Heart right ventricle (tissue), 16 donors: ENCODE measurements at regions of chr18 and their contacts with region 1.

Region 1: GRCh38 chr18:22169007-22169864 is at the start of gene GATA6:
- DNase-seq: peak; percentile 89 to 90
- ATAC-seq: peak; percentile 59 to 87 (median 72)
- H3K4me3 ChIP-seq: peak within 1 kb of the TSS; percentile 71 to 97 (median 93)
- H3K27ac ChIP-seq: peak within 1 kb of the TSS; percentile 92 to 100 (median 98)
- H3K4me1 ChIP-seq: peaks cover 0 to 43% (median 29%) of the 10 kb centered on the region in 9 donors
- H3K27me3 ChIP-seq: peaks cover 0 to 96% (median 37%) of the 10 kb centered on the region in 7 donors
- CTCF ChIP-seq: peak in 7 of 9 donors; percentile 25 to 68 (median 53)
- total RNA-seq, gene GATA6: 54.6 to 99.5 (median 73.4) TPM

Region 2: GRCh38 chr18:21997207-21998143 is 171.8 kb before region 1 on chr18:
- intact Hi-C with region 1: loop called in 7 of 10 experiments (anchors 2 to 10 kb)
- DNase-seq: peak in 1 of 2 donors; percentile 20
- ATAC-seq: peak; percentile 32 to 87 (median 65)
- H3K4me3 ChIP-seq: no peak overlapping the region
- H3K27ac ChIP-seq: peak overlapping the region in 9 of 10 donors; percentile 17 to 82 (median 68)
- H3K4me1 ChIP-seq: peaks cover 0 to 34% (median 9%) of the 10 kb centered on the region in 9 donors
- H3K27me3 ChIP-seq: no peaks in the 10 kb centered on the region
- CTCF ChIP-seq: peak; percentile 65 to 90 (median 85)

Region 3: GRCh38 chr18:22094358-22094734 is 74.9 kb before region 1 on chr18:
- intact Hi-C with region 1: loop called in 2 of 10 experiments (anchors 5 kb)
- DNase-seq: no peak
- ATAC-seq: no peak
- H3K4me3 ChIP-seq: no peak overlapping the region
- H3K27ac ChIP-seq: no peak overlapping the region
- H3K4me1 ChIP-seq: peaks cover 0 to 7% (median 3%) of the 10 kb centered on the region in 9 donors
- H3K27me3 ChIP-seq: peaks cover 0 to 7% (median 0%) of the 10 kb centered on the region in 7 donors
- CTCF ChIP-seq: no peak

Region 4: DNA sequence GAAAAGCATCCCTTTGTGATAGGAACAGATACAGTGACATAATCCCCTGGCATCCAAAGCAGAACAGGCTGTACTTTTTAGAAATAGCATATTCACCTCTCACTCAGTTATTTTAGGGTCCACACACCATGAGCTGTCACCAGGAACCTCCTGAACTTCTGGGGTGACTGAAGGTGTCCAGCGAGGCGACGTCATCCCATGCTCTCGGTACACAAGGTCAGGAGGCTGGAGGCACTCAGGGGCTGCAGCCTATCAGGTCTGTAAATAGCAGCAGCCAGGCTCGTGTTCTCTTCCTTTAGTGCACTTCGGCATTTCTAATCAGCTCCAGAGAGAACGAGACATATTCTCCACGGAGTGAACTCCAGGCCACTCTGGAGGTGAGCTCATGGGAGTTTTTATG is 98.5 kb after region 1 on chr18:
- intact Hi-C with region 1: loop called in 2 of 10 experiments (anchors 5 kb)
- DNase-seq: peak; percentile 70 to 85
- ATAC-seq: peak; percentile 83 to 97 (median 92)
- H3K4me3 ChIP-seq: peak overlapping the region in 5 of 10 donors; percentile 44 to 52 (median 48)
- H3K27ac ChIP-seq: peak overlapping the region; percentile 78 to 95 (median 91)
- H3K4me1 ChIP-seq: peaks cover 0 to 41% (median 4%) of the 10 kb centered on the region in 9 donors
- H3K27me3 ChIP-seq: no peaks in the 10 kb centered on the region
- CTCF ChIP-seq: no peak

Region 5: DNA sequence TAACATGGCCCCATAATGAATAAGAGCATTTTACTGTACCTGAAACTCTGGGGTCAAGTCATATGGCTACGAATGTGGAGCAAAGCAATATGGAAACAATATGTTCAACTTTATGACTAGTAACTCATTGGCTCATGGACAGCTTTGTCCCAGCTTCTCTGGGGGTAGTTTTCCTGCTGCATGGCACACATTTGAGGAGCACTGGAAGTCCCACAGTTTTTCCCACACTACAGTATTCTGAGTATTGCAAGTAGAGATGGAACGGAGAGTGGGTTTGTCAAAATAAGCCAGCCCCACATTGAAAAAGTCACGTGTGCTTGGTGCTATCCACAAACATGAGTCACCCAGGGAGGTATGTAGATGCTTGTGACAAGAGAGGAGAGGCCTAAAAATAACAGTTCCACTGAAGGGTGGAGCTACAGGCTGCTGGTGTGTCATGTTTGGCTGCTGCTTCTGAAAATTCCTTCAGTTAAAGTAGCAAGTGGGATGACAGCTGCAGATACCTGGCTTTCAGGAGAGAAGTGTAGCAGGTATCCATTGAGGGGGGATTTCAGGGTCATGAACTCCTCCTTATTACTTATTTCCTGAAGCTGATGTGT is 296.7 kb after region 1 on chr18:
- intact Hi-C with region 1: loop called in 4 of 10 experiments (anchors 5 to 10 kb)
- DNase-seq: peak in 1 of 2 donors; percentile 74
- ATAC-seq: peak; percentile 85 to 95 (median 90)
- H3K4me3 ChIP-seq: no peak overlapping the region
- H3K27ac ChIP-seq: peak overlapping the region; percentile 56 to 90 (median 85)
- H3K4me1 ChIP-seq: peaks cover 15 to 48% (median 42%) of the 10 kb centered on the region in 9 donors
- H3K27me3 ChIP-seq: no peaks in the 10 kb centered on the region
- CTCF ChIP-seq: no peak

Region 6: DNA sequence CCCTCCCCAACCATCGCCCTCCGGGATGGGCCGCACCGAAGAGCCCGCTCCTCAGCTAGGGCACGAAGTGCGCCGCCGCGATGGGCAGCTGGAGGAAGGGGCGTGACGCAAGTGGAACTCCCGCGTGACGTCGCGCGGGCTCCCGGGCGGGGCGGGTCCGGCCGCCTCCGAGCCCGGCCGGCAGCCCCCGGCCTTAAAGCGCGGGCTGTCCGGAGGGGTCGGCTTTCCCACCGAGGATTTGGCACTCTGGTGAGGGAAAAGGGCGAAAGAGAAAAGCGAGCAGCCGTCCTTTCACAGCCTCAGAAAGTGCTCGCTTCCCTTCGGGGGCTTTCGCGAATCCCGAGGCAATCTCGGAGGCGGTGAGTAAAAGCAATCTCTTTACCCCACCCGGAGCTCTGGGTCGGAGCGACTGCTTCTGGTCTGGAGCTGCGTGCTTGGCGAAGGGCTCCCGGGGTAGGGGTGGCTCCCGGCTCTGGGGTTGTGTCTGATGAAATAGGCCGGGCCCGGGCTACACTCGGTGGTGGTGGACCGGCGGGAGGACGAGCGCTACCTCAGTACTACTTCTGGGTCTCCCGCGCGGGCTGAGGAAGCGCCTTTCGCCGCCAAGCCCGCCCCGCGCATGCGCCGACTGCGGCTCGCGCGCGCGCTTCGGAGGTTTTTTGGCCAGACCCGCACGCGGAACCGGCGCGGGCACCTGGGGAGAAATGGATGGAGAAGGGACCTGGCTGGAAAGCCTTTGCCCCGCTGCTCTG is 764.1 kb after region 1 on chr18 and contains the start of gene RBBP8:
- intact Hi-C with region 1: loop called in 1 of 10 experiments (anchors 5 kb)
- DNase-seq: peak; percentile 85 to 89
- ATAC-seq: peak; percentile 97 to 98 (median 98)
- H3K4me3 ChIP-seq: peak within 1 kb of the TSS; percentile 71 to 98 (median 86)
- H3K27ac ChIP-seq: peak within 1 kb of the TSS; percentile 87 to 99 (median 96)
- H3K4me1 ChIP-seq: peaks cover 0 to 27% (median 11%) of the 10 kb centered on the region in 9 donors
- H3K27me3 ChIP-seq: no peaks in the 10 kb centered on the region
- CTCF ChIP-seq: no peak
- total RNA-seq, gene RBBP8: 4.0 to 13.5 (median 7.1) TPM